K562 (cell line): ENCODE measurements at regions of chr2 and their contacts with region 1.

Region 1: DNA sequence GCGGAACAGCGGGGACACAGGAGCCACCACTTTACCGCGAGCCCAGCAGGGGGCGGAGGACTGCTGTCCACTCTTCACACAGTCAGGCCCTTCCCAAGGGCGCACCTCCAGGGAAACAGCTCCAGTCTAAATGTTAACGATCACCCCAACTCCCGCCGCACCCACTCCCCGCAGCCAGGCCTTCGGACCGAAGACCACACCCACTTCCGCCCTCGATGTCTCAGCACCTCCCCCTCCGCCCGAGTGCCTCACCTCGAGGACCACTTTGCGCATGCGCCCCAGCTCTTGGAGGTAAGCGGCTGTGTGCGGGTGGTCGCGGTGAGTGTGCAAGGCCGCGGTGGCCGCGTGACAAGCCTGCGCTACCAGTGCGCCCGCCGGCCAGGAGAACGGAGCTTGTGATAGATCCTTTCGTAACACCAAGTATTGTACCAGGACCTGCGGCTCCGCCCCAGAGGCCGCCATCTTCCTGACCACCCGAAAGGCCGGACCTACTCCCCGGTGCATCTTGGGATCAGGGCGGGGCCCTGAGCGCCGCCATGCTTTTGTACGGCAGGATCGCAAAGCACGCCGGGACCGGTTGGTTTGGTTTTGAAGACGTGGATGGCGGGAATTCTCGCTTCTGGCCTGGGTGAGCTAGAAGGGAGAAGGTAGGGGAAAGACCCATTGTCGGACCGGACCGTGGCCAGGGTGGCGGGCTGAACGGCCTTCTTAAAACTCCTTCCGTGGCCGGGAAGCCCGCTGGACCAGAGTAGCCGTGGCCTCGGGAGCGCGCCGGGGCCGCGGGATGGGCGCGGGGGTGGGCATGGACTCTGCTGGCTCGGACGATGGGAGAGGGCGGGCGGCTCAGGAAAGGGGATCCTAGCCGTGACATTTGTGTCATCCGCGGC is at the starts of genes CENPO and PTRHD1:
- DNase-seq: peak; percentile 95 to 98 (median 96)
- ATAC-seq: peak; percentile 89
- H3K4me3 ChIP-seq: peak within 1 kb of the TSS; percentile 87
- H3K27ac ChIP-seq: peak within 1 kb of the TSS; percentile 99
- H3K4me1 ChIP-seq: peaks cover 9 to 35% of the 10 kb centered on the region in 2 experiments; a peak in 4 of 5 replicates
- H3K27me3 ChIP-seq: no peaks in the 10 kb centered on the region
- CTCF ChIP-seq: peak; percentile 82 to 87 (median 85)
- EP300 ChIP-seq: peak; percentile 48
- POLR2A ChIP-seq: peak; percentile 93
- RAD21 ChIP-seq: peak; percentile 77
- polyA plus RNA-seq, gene CENPO: 30.6 to 38.9 TPM
- polyA plus RNA-seq, gene PTRHD1: 32.9 to 46.6 TPM

Region 2: DNA sequence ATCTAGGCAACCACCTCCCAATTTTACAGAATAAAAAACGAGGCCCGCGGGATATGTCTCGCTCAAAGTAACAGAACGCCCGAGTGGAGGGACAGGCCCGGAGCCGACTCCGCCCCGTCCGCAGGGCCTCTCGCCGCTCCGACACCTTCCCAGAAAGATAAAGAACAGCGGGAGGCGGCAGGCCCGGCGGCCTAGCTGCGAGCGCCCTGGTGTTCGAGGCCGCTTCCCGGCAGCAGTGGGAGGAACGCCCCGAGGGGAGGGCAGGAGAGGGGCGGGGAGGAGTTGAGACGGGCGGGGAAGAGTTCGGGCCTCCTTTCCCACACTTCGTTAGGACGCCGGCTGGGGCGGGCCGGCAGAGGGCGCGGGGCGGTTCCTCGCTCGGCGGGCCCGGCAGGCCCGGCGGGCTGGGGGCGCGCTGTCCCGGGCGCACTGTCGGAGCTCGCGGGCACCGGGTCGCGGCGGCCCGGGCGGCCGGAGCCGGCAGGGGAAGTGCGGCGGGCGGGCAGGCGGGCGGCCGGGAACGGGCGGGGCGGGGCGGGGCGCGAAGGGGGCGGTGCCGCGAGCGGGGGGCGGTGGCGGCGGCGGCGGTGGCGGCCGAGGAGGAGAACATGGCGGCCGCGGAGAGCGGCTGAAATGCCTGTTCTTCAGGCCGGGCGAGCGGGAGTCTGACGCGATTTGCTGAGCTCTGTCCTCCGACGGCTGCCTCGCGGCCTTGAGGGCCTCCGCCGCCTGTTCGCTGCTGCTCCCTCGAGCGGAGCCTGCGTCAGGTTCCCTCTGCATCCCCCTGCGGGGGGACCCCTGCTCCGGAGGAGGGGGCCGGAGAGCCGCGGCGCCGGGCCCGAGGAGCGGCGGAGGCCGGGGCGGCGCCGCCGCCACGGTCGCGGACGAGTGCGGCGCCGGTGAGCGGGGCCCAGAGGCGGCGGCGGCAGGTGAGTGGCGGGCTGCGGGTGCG is 302.2 kb before region 1 on chr2 and contains the start of gene NCOA1:
- CTCF ChIA-PET with region 1: no interaction called
- POLR2A ChIA-PET with region 1: interaction called, 3 read pairs
- in situ Hi-C with region 1: loop called (anchors 5 kb)
- intact Hi-C with region 1: loop called (anchors 2 kb)
- DNase-seq: peak; percentile 88 to 97 (median 92)
- ATAC-seq: peak; percentile 87
- H3K4me3 ChIP-seq: peak within 1 kb of the TSS; percentile 69
- H3K27ac ChIP-seq: peak within 1 kb of the TSS; percentile 77
- H3K4me1 ChIP-seq: peaks cover 24 to 44% of the 10 kb centered on the region in 2 experiments
- H3K27me3 ChIP-seq: no peaks in the 10 kb centered on the region
- CTCF ChIP-seq: peak in 2 of 3 experiments; percentile 8 to 30; a peak in 3 of 6 replicates
- EP300 ChIP-seq: 0 out of 2 replicates have a peak, but pooled peaks have one; percentile 34
- POLR2A ChIP-seq: peak; percentile 57; the same call in 1 of the 2 replicates
- RAD21 ChIP-seq: peak in 1 of 2 experiments; percentile 31
- polyA plus RNA-seq, gene NCOA1: 4.9 to 6.2 TPM

Region 3: DNA sequence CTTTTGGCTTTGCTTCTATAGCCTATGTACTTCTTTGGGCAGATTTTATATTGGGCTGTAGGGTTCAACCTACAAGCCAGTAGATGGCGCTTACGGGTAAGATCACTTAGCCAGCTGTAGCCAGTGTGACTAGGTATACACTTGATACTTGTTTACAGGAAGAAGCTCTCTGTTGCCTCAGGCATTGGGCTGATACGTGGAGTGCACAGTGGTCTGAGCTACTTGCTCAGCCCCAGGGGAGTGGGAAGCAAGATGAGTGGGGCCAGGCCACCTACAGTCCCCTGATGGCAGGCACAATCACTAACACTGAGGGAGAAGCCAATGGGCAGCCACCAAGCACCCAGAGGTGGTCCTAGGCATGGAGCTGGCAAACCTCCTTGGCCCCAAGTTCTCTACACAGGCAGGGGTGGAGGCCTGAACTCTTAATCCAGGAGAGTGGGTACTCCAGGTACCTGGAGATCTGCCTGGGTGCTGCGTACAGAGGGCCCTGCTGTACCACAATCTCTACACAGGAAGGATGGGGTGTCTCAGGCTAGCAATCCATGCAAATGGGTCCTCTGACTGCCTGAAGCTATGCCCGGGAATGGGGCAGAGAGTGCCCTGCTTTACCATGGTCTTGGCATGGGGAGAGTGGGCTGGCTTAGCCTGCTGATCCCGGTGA is 179.8 kb before region 1 on chr2:
- CTCF ChIA-PET with region 1: interaction called, 4 read pairs
- POLR2A ChIA-PET with region 1: interaction called, 3 read pairs
- in situ Hi-C with region 1: no loop called
- intact Hi-C with region 1: loop called (anchors 1 kb)
- DNase-seq: peak in 2 of 4 experiments; percentile 50 to 65
- ATAC-seq: peak; percentile 97
- H3K4me3 ChIP-seq: no peak overlapping the region
- H3K27ac ChIP-seq: no peak overlapping the region; the same call in 2 of the 3 replicates
- H3K4me1 ChIP-seq: peaks cover 0 to 2% of the 10 kb centered on the region in 2 experiments; a peak in 2 of 5 replicates
- H3K27me3 ChIP-seq: no peaks in the 10 kb centered on the region
- CTCF ChIP-seq: peak; percentile 53 to 72 (median 68)
- EP300 ChIP-seq: no peak
- POLR2A ChIP-seq: no peak
- RAD21 ChIP-seq: peak in 1 of 2 experiments; percentile 85; a peak in 2 of 4 replicates

Region 4: DNA sequence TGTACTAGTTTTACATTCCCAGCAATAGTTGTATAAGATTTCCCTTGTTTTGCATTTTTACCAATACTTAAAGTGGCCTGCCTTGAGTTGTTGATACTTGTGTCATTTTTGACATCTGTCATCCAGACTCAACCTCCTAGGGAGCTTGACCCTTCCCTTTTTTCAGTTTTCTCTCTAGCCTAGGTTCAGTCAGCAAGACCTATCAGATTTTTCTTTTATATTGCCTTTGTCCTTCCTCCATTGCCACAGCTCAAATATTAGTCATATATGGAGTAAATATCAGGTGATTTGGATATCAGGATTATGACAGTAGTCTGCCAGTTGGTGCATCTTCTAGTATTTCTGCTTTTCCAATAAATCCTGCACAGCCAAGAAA is 13.5 kb after region 1 on chr2:
- CTCF ChIA-PET with region 1: no interaction called
- POLR2A ChIA-PET with region 1: interaction called, 10 read pairs
- in situ Hi-C with region 1: no loop called
- intact Hi-C with region 1: no loop called
- DNase-seq: no peak
- ATAC-seq: peak; percentile 75
- H3K4me3 ChIP-seq: no peak overlapping the region
- H3K27ac ChIP-seq: peak overlapping the region; percentile 60; the same call in 2 of the 3 replicates
- H3K4me1 ChIP-seq: peaks cover 3 to 17% of the 10 kb centered on the region in 2 experiments
- H3K27me3 ChIP-seq: no peaks in the 10 kb centered on the region
- CTCF ChIP-seq: no peak
- EP300 ChIP-seq: no peak
- POLR2A ChIP-seq: no peak
- RAD21 ChIP-seq: no peak

Region 5: GRCh38 chr2:24816404-24816803 is 23.3 kb after region 1 on chr2:
- CTCF ChIA-PET with region 1: no interaction called
- POLR2A ChIA-PET with region 1: interaction called, 10 read pairs
- in situ Hi-C with region 1: no loop called
- intact Hi-C with region 1: no loop called
- DNase-seq: no peak
- ATAC-seq: no peak
- H3K4me3 ChIP-seq: no peak overlapping the region
- H3K27ac ChIP-seq: peak overlapping the region; percentile 85
- H3K4me1 ChIP-seq: peaks cover 5 to 28% of the 10 kb centered on the region in 2 experiments; a peak in 4 of 5 replicates
- H3K27me3 ChIP-seq: no peaks in the 10 kb centered on the region
- CTCF ChIP-seq: no peak
- EP300 ChIP-seq: no peak
- POLR2A ChIP-seq: no peak
- RAD21 ChIP-seq: no peak

Region 6: DNA sequence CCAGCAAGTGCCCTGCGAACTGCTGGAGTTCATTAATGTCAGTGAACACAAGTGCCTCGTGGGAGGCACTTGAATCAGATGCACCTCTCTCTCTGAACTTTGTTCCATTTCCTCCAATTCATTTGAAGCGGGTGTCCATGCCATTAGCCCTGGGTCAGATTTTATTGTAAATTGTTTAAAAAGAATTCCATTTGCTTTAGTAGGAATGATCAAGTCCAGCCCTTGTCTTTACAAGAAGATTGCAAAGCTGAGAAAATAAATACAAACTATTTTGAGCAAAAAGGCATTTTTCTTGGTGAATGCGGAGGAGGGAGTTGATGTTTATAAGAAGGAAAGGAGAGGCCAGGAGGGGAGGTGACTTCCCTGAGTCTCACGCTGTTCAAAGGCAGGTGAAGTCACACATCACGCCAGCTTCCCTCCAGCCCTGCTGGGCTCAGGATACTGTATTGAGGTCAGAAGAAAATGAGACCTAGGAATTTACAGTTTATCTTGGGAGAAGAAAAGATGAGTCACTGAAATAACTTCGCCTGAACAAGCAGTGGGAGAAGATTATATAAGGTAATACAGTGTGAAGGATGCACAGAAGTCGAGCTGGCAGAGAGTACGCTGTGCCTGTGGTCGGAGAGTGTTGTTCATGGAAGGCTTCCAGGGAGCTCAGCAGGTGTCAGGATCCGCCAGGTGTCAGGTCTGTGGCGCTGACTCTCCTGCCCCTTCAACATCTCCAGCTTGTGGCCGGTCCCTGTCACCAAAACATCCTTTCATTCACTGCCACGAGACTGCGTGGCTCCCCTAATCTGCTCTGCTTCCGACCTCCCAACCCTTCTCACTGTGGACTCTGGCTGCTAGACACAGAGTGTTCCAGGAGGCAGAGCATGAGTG is 285.3 kb after region 1 on chr2:
- CTCF ChIA-PET with region 1: no interaction called
- POLR2A ChIA-PET with region 1: no interaction called
- in situ Hi-C with region 1: no loop called
- intact Hi-C with region 1: no loop called
- DNase-seq: no peak
- ATAC-seq: no peak
- H3K4me3 ChIP-seq: no peak overlapping the region
- H3K27ac ChIP-seq: no peak overlapping the region
- H3K4me1 ChIP-seq: no peaks in the 10 kb centered on the region
- H3K27me3 ChIP-seq: peaks cover 32 to 44% of the 10 kb centered on the region in 2 experiments
- CTCF ChIP-seq: no peak
- EP300 ChIP-seq: no peak
- POLR2A ChIP-seq: no peak
- RAD21 ChIP-seq: no peak